Activated CD4-positive, alpha-beta T cell treated with anti-CD3 and anti-CD28 coated beads, Interleukin-2, amount 10 ng/mL, durations not matched to agents 24 days and 14 days (primary cell): ENCODE measurements at regions of chr13 and their contacts with region 1.

Region 1: DNA sequence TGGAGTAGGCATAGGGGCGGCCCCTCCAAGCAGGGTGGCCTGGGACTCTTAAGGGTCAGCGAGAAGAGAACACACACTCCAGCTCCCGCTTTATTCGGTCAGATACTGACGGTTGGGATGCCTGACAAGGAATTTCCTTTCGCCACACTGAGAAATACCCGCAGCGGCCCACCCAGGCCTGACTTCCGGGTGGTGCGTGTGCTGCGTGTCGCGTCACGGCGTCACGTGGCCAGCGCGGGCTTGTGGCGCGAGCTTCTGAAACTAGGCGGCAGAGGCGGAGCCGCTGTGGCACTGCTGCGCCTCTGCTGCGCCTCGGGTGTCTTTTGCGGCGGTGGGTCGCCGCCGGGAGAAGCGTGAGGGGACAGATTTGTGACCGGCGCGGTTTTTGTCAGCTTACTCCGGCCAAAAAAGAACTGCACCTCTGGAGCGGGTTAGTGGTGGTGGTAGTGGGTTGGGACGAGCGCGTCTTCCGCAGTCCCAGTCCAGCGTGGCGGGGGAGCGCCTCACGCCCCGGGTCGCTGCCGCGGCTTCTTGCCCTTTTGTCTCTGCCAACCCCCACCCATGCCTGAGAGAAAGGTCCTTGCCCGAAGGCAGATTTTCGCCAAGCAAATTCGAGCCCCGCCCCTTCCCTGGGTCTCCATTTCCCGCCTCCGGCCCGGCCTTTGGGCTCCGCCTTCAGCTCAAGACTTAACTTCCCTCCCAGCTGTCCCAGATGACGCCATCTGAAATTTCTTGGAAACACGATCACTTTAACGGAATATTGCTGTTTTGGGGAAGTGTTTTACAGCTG is at the starts of genes BRCA2 and ZAR1L:
- DNase-seq: peak; percentile 97
- H3K4me3 Mint-ChIP-seq: peak within 1 kb of the TSS; percentile 96
- H3K27ac Mint-ChIP-seq: peak within 1 kb of the TSS; percentile 100
- H3K4me1 Mint-ChIP-seq: peaks cover 24% of the 10 kb centered on the region
- H3K27me3 Mint-ChIP-seq: no peaks in the 10 kb centered on the region
- total RNA-seq, gene BRCA2: 23.1 and 24.7 TPM in 2 replicates
- total RNA-seq, gene ZAR1L: 0.19 TPM in 1 of 2 replicates, not detected in the other

Region 2: DNA sequence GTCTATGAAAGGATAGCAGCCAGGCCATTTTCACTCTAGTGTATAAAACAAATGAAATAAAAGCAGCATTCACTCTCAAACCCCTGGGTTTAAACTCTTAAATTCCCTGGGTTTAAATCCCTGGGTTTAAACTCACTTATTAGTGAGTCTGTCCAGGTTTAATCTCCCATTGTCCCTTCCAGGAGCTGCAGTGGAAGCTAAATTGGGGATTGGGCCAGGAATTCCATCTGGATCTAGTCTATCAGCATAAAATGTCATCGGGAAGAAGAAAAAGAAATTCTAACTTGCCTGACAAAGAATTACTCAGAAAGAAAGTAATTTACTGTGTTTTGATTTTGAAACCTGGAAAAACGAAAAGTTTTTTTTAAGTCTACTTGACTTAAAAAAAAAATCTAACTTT is 229.1 kb before region 1 on chr13:
- intact Hi-C with region 1: no loop called
- DNase-seq: no peak
- H3K4me3 Mint-ChIP-seq: no peak overlapping the region
- H3K27ac Mint-ChIP-seq: no peak overlapping the region
- H3K4me1 Mint-ChIP-seq: no peaks in the 10 kb centered on the region
- H3K27me3 Mint-ChIP-seq: no peaks in the 10 kb centered on the region

Region 3: GRCh38 chr13:32299893-32300292 is 15.5 kb before region 1 on chr13:
- intact Hi-C with region 1: loop called (anchors 2 kb)
- DNase-seq: no peak
- H3K4me3 Mint-ChIP-seq: no peak overlapping the region
- H3K27ac Mint-ChIP-seq: no peak overlapping the region
- H3K4me1 Mint-ChIP-seq: peaks cover 17% of the 10 kb centered on the region
- H3K27me3 Mint-ChIP-seq: peaks cover 18% of the 10 kb centered on the region

Region 4: GRCh38 chr13:32538621-32539246 is 223.3 kb after region 1 on chr13 and contains the start of gene N4BP2L2:
- intact Hi-C with region 1: loop called (anchors 1 kb)
- DNase-seq: peak; percentile 97
- H3K4me3 Mint-ChIP-seq: peak within 1 kb of the TSS; percentile 98
- H3K27ac Mint-ChIP-seq: peak within 1 kb of the TSS; percentile 99
- H3K4me1 Mint-ChIP-seq: peaks cover 37% of the 10 kb centered on the region
- H3K27me3 Mint-ChIP-seq: peaks cover 8% of the 10 kb centered on the region
- total RNA-seq, gene N4BP2L2: 87.5 and 88.0 TPM in 2 replicates